RWPE1 (cell line): ENCODE measurements at regions of chr12 and their contacts with region 1.

Region 1: DNA sequence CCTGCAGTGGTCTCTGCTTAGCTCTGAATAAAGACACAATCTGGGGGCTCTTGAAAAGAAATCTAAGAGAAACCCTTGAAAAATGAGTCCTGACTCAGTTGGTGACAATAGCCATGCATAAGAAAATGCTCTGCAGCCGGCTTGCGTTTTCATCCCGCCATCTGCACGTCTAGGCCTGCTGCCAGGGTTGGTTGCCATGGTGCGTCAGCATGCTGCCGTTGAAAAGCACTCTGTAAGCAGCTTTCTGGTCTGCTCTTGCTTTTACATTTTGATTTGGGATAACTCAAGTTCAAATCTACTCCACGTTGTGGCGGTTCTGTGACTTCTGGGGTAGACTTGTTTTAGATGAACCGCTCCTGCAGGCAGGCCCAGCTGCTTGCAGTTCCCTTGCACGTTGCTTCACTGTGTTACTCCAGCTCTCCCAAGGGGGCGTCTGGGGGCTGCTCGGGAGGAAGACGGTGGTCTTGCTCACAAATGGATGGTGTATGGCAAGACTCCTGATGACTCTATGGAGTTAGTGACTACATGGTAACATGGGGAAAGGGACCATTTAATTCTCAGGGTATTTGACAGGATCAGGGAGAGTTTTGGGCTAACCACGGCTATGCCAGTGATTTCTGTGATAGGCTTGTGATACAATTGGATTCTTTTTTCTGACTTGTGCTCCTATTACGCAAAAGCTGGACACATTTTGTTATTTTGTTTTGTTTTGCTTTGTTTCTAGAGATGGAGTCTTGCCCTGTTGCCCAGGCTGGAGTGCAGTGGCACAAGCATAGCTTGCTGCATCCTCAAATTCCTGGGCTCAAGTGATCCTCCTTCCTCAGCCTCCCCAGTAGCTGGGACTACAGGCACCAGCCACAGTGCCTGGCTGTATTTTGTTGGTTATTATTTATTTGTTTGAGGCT is 15.8 kb downstream of the WNT5B start:
- DNase-seq: peak; percentile 34
- H3K27ac ChIP-seq: no peak overlapping the region
- CTCF ChIP-seq: no peak

Region 2: GRCh38 chr12:1634590-1635191 is 10.1 kb before region 1 on chr12:
- CTCF ChIA-PET with region 1: interaction called, 17 read pairs
- POLR2A ChIA-PET with region 1: no interaction called
- DNase-seq: peak; percentile 62
- H3K27ac ChIP-seq: no peak overlapping the region
- CTCF ChIP-seq: peak; percentile 72